ENCODE measurements at regions of chrX and their contacts with region 1.

Region 1: DNA sequence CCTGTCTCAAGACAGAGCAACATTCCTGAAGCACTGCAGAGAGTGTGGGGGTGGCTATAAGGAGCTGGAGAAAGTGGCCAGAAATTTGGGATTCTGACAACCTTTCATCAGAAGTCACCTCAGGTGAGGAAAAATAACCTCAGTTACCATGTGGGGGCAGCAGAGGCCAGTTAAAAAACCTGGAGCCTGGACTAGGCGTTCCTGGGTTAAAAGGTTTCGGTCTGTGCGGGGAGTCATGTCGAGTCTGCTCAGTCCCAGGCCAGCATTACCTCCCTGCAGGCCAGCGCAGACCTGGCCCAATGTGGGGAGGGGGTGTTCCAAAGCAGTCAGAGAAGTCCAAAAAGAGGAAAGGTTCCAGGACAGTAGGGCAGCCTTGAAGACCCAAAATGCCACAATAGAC is 10.9 kb upstream of the NALF2 start:
- DNase-seq: peak; percentile 38
- ATAC-seq: no peak
- H3K4me3 Mint-ChIP-seq: no peak overlapping the region
- H3K27ac Mint-ChIP-seq: no peak overlapping the region
- H3K4me1 Mint-ChIP-seq: no peaks in the 10 kb centered on the region
- H3K27me3 Mint-ChIP-seq: peaks cover 3% of the 10 kb centered on the region
- CTCF ChIP-seq: peak; percentile 36

Region 2: GRCh38 chrX:70022616-70023015 is 529.4 kb after region 1 on chrX:
- CTCF ChIA-PET with region 1: no interaction called
- POLR2A ChIA-PET with region 1: no interaction called
- intact Hi-C with region 1: loop called (anchors 5 kb)
- DNase-seq: no peak
- ATAC-seq: no peak
- H3K4me3 Mint-ChIP-seq: no peak overlapping the region
- H3K27ac Mint-ChIP-seq: no peak overlapping the region
- H3K4me1 Mint-ChIP-seq: peaks cover 6% of the 10 kb centered on the region
- H3K27me3 Mint-ChIP-seq: no peaks in the 10 kb centered on the region
- CTCF ChIP-seq: no peak

Measured in activated CD8-positive, alpha-beta T cell treated with anti-CD3 and anti-CD28 coated beads for 36 hours (primary cell).